Common myeloid progenitor, CD34-positive (primary cell): ENCODE measurements at regions of chr12 and their contacts with region 1.

Region 1: DNA sequence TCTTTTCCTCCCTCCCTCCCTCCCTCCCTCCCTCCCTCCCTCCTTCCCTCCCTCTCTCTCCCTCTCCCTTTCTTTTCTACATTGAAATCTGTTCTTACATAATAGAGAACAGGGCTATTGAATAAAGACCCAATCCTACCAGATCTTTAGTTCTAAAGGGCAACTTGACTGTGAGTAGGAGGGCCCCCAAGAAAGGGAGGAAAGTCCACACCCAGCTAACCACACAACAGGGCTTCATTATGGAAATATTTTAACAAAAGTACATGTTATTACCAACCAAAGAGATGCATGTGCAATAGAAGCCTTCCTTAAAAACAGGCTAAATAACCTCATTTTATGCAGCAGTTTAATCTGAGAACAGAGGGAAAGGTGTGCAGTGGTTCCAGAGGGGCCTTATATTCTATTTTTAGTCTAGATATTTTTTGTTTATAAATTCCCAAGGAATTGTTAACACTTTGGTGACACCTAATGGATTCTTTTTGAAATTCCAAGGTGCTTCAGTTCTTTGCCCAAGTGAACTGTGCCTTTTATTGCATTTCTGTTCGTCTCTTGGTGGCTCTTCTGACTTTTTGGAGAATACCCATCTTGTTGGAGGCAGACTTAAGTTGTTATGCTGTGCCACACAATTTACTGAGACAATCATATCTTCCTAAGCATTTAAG is 63.0 kb downstream of the GNS start:
- DNase-seq: peak in 2 of 3 donors; percentile 52 to 60
- H3K4me3 ChIP-seq: no peak overlapping the region
- H3K27ac ChIP-seq: no peak overlapping the region
- H3K4me1 ChIP-seq: peaks cover 0 to 7% (median 0%) of the 10 kb centered on the region in 4 experiments
- H3K27me3 ChIP-seq: no peaks in the 10 kb centered on the region

Region 2: DNA sequence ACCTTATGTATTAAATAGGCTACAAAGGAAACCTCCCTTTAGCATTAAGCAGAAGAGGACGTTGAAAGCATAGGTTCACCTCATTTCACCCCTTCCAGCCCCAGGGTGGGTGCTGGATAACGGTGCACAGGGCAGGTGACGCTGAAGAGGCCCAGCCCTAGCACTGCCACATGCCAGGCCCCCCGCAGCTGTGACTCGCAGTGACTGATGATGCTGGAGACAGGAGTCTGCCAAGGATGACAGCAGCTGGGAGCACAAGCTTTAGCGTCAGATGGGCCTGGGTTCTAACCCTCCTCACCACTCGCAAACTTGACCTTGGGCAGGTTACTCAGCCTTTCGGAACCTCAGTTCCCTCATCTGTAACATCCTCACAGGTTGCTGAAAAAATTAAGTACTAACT is 167.6 kb before region 1 on chr12:
- CTCF ChIA-PET with region 1: no interaction called
- POLR2A ChIA-PET with region 1: no interaction called
- DNase-seq: no peak
- H3K4me3 ChIP-seq: no peak overlapping the region
- H3K27ac ChIP-seq: no peak overlapping the region
- H3K4me1 ChIP-seq: no peaks in the 10 kb centered on the region
- H3K27me3 ChIP-seq: no peaks in the 10 kb centered on the region

Region 3: DNA sequence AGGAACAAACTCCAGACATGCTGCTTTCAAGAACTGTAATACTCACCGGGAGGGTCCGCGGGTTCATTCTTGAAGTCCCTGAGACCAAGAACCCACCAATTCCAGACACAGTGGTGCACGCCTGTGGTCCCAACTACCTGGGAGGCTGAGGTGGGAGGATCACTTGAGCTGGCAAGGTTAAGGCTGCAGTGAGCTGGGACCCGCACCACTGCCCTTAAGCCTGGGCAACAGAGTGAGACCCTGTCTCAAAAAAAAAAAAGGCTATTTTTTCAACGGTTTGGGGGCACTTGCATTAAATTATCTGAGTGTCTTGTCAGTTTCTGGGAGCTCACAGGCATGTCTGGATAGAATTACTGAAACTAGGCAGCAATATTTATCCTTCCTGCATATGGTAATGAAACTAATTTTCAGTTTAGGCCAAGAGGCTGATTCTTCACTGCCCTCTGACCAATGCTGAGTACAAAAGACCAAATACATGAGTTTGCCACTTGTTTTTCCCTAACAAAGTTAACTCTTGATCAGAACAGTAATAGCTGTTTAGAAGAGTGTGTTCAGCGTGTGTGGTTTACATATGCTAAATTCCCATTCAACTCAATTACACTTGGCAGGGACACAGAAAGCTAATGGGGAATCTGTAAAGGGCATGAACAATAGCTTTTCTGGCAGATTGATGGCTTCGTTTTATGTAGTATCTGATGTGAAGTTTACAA is 151.7 kb before region 1 on chr12:
- CTCF ChIA-PET with region 1: interaction called, 178 read pairs
- POLR2A ChIA-PET with region 1: interaction called, 7 read pairs
- DNase-seq: no peak
- H3K4me3 ChIP-seq: no peak overlapping the region
- H3K27ac ChIP-seq: no peak overlapping the region
- H3K4me1 ChIP-seq: no peaks in the 10 kb centered on the region
- H3K27me3 ChIP-seq: peaks cover 0 to 6% (median 0%) of the 10 kb centered on the region in 5 experiments

Region 4: GRCh38 chr12:64600189-64600588 is 96.0 kb before region 1 on chr12:
- CTCF ChIA-PET with region 1: interaction called, 13 read pairs
- POLR2A ChIA-PET with region 1: no interaction called
- DNase-seq: peak in 1 of 3 donors; percentile 27
- H3K4me3 ChIP-seq: no peak overlapping the region
- H3K27ac ChIP-seq: no peak overlapping the region
- H3K4me1 ChIP-seq: peaks cover 4 to 19% (median 11%) of the 10 kb centered on the region in 4 experiments
- H3K27me3 ChIP-seq: peaks cover 0 to 3% (median 0%) of the 10 kb centered on the region in 5 experiments

Region 5: GRCh38 chr12:64610149-64610678 is 86.0 kb before region 1 on chr12 and contains the start of gene RASSF3:
- CTCF ChIA-PET with region 1: interaction called, 14 read pairs
- POLR2A ChIA-PET with region 1: interaction called, 3 read pairs
- DNase-seq: peak in 2 of 3 donors; percentile 65 to 73
- H3K4me3 ChIP-seq: peak within 1 kb of the TSS; percentile 81 to 97 (median 87)
- H3K27ac ChIP-seq: peak within 1 kb of the TSS in 1 of 2 experiments; percentile 81
- H3K4me1 ChIP-seq: peaks cover 15 to 50% (median 36%) of the 10 kb centered on the region in 4 experiments
- H3K27me3 ChIP-seq: no peaks in the 10 kb centered on the region

Region 6: GRCh38 chr12:64706306-64706705 is 10.1 kb after region 1 on chr12:
- CTCF ChIA-PET with region 1: interaction called, 30 read pairs
- POLR2A ChIA-PET with region 1: no interaction called
- DNase-seq: no peak
- H3K4me3 ChIP-seq: no peak overlapping the region
- H3K27ac ChIP-seq: no peak overlapping the region
- H3K4me1 ChIP-seq: no peaks in the 10 kb centered on the region
- H3K27me3 ChIP-seq: no peaks in the 10 kb centered on the region